Naive thymus-derived CD4-positive, alpha-beta T cell (primary cell): ENCODE measurements at regions of chr9 and their contacts with region 1.

Region 1: DNA sequence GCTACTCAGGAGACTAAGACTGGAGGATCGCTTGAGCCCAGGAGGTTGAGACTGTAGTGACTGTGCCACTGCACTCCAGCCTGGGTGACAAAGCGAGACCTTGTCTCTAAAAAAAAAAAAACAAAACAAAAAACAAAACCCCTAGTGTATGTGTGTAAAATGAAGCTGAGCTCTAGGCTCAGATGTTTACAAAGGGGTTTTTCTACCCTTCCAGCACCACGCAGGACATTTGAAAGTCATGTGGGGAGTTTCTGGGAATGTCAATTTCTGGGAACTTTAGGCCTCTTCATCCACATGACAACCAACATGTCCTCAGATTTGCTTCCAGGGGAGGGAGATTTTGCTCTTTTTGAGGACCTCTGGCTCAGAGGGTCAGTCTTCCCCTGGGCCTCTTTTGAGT is 42.4 kb upstream of the AIF1L start:
- DNase-seq: no peak
- ATAC-seq: no peak
- H3K4me3 ChIP-seq: no peak overlapping the region
- H3K4me3 Mint-ChIP-seq: no peak overlapping the region
- H3K27ac ChIP-seq: no peak overlapping the region
- H3K27ac Mint-ChIP-seq: no peak overlapping the region
- H3K4me1 ChIP-seq: no peaks in the 10 kb centered on the region
- H3K4me1 Mint-ChIP-seq: no peaks in the 10 kb centered on the region
- H3K27me3 ChIP-seq: no peaks in the 10 kb centered on the region
- H3K27me3 Mint-ChIP-seq: no peaks in the 10 kb centered on the region

Region 2: GRCh38 chr9:130927995-130928900 is 125.6 kb before region 1 on chr9:
- CTCF ChIA-PET with region 1: no interaction called
- POLR2A ChIA-PET with region 1: no interaction called
- intact Hi-C with region 1: no loop called
- DNase-seq: no peak
- ATAC-seq: no peak
- H3K4me3 ChIP-seq: no peak overlapping the region
- H3K4me3 Mint-ChIP-seq: no peak overlapping the region
- H3K27ac ChIP-seq: no peak overlapping the region
- H3K27ac Mint-ChIP-seq: no peak overlapping the region
- H3K4me1 ChIP-seq: no peaks in the 10 kb centered on the region
- H3K4me1 Mint-ChIP-seq: peaks cover 0 to 4% (median 0%) of the 10 kb centered on the region in 7 donors
- H3K27me3 ChIP-seq: no peaks in the 10 kb centered on the region
- H3K27me3 Mint-ChIP-seq: peaks cover 11 to 28% (median 18%) of the 10 kb centered on the region in 5 donors

Region 3: DNA sequence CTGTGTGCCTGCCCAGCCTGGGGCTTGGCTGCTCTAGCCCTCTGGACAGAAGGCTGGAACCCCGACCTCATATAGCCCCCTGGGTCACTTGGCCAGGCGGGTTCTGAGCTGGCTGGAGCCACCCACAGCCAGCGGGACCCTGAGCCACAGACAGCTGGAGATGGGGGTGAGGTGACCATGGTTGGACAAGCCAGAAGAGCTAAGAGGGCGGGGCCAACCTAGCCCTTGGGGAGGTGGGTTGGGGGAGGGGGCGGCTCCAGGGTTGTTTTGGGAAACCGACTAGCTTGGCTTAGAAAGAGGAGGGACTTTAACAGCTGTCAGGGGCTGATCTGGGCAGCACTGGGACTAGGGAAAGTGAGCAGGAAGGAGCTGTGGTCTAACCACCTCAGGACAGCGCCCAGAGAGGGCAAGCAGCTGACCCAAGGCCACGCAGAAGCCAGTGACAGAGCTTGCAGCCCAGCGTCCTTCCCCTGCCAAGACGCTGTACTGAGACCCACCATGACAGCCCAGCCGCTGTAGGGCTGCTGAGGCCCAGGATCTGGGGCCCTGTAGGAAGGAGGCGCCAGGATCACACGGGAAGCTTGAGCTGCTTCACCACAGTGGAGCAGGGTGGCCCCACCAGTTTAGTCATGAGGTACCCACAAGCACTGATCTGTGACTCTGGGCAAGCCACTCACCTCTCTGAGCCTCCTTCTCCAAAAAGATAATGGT is 44.6 kb after region 1 on chr9:
- CTCF ChIA-PET with region 1: no interaction called
- POLR2A ChIA-PET with region 1: no interaction called
- intact Hi-C with region 1: no loop called
- DNase-seq: no peak
- ATAC-seq: no peak
- H3K4me3 ChIP-seq: no peak overlapping the region
- H3K4me3 Mint-ChIP-seq: peak overlapping the region in 1 of 10 donors; percentile 42
- H3K27ac ChIP-seq: no peak overlapping the region
- H3K27ac Mint-ChIP-seq: peak overlapping the region in 1 of 9 donors; percentile 34
- H3K4me1 ChIP-seq: no peaks in the 10 kb centered on the region
- H3K4me1 Mint-ChIP-seq: peaks cover 3 to 12% (median 10%) of the 10 kb centered on the region in 7 donors
- H3K27me3 ChIP-seq: peaks cover 0 to 6% of the 10 kb centered on the region in 2 donors
- H3K27me3 Mint-ChIP-seq: peaks cover 24 to 39% (median 28%) of the 10 kb centered on the region in 5 donors

Region 4: DNA sequence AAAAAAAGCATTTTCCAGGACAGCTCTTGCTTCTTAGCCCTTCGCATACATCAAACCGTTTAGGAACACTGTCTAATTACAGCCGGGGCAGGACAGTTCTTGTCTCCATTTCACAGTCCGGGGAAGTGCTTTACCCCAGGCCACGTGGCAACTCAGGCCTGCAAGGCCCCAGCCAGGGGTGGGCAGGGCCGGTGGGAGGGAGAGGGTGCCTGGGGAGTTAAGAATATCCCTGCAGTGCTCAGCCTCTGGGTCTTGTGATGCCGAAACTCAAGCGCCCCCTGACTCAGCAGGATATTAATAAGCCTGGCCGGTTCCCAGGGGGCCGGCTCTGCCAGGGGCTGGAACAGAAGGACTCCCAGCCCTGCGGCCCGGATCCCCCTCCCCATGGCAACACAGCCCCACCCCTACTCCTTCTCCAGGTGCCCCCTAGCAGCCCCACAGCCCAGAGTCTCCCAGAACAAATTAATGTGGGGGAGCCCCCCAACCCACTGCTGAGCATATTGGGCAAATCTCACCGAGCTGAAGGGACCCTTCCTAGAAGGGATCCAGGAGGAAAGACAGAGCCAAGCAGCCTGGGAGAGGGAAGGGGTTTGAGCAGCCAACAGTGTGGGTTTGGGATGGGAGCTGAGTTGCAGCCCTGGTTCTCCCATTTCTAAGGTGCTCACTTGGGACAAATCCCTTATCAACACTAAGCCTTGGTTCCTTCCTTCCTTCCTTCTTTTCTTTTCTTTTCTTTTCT is 280.9 kb after region 1 on chr9:
- CTCF ChIA-PET with region 1: interaction called, 3 read pairs
- POLR2A ChIA-PET with region 1: no interaction called
- intact Hi-C with region 1: loop called in 1 of 2 experiments (anchors 1 kb)
- DNase-seq: no peak
- ATAC-seq: no peak
- H3K4me3 ChIP-seq: no peak overlapping the region
- H3K4me3 Mint-ChIP-seq: no peak overlapping the region
- H3K27ac ChIP-seq: no peak overlapping the region
- H3K27ac Mint-ChIP-seq: no peak overlapping the region
- H3K4me1 ChIP-seq: peaks cover 0 to 3% of the 10 kb centered on the region in 2 donors
- H3K4me1 Mint-ChIP-seq: peaks cover 4 to 7% (median 4%) of the 10 kb centered on the region in 7 donors
- H3K27me3 ChIP-seq: no peaks in the 10 kb centered on the region
- H3K27me3 Mint-ChIP-seq: peaks cover 0 to 5% (median 0%) of the 10 kb centered on the region in 5 donors

Region 5: GRCh38 chr9:131423171-131423581 is 369.3 kb after region 1 on chr9:
- CTCF ChIA-PET with region 1: no interaction called
- POLR2A ChIA-PET with region 1: no interaction called
- intact Hi-C with region 1: no loop called
- DNase-seq: no peak
- ATAC-seq: peak; percentile 26
- H3K4me3 ChIP-seq: no peak overlapping the region
- H3K4me3 Mint-ChIP-seq: peak overlapping the region in 7 of 10 donors; percentile 40 to 66 (median 59)
- H3K27ac ChIP-seq: no peak overlapping the region
- H3K27ac Mint-ChIP-seq: peak overlapping the region in 7 of 9 donors; percentile 9 to 87 (median 60)
- H3K4me1 ChIP-seq: peaks cover 25 to 46% of the 10 kb centered on the region in 2 donors
- H3K4me1 Mint-ChIP-seq: peaks cover 54 to 97% (median 73%) of the 10 kb centered on the region in 7 donors
- H3K27me3 ChIP-seq: no peaks in the 10 kb centered on the region
- H3K27me3 Mint-ChIP-seq: no peaks in the 10 kb centered on the region